CD8-positive, alpha-beta memory T cell (primary cell): ENCODE measurements at regions of chr12 and their contacts with region 1.

Region 1: GRCh38 chr12:3964439-3964838 is 91.2 kb upstream of the PARP11 start:
- DNase-seq: no peak
- H3K4me3 ChIP-seq: no peak overlapping the region
- H3K4me3 Mint-ChIP-seq: no peak overlapping the region
- H3K27ac ChIP-seq: no peak overlapping the region
- H3K27ac Mint-ChIP-seq: peak overlapping the region in 2 of 8 donors; percentile 19 to 69
- H3K4me1 ChIP-seq: peaks cover 20% of the 10 kb centered on the region
- H3K4me1 Mint-ChIP-seq: peaks cover 15 to 24% (median 19%) of the 10 kb centered on the region in 3 donors
- H3K27me3 ChIP-seq: no peaks in the 10 kb centered on the region
- H3K27me3 Mint-ChIP-seq: peaks cover 9 to 11% of the 10 kb centered on the region in 2 donors

Region 2: GRCh38 chr12:3538466-3539030 is 425.9 kb before region 1 on chr12:
- CTCF ChIA-PET with region 1: no interaction called
- POLR2A ChIA-PET with region 1: no interaction called
- DNase-seq: no peak
- H3K4me3 ChIP-seq: no peak overlapping the region
- H3K4me3 Mint-ChIP-seq: no peak overlapping the region
- H3K27ac ChIP-seq: no peak overlapping the region
- H3K27ac Mint-ChIP-seq: no peak overlapping the region
- H3K4me1 ChIP-seq: no peaks in the 10 kb centered on the region
- H3K4me1 Mint-ChIP-seq: no peaks in the 10 kb centered on the region
- H3K27me3 ChIP-seq: no peaks in the 10 kb centered on the region
- H3K27me3 Mint-ChIP-seq: peaks cover 12 to 36% of the 10 kb centered on the region in 2 donors

Region 3: DNA sequence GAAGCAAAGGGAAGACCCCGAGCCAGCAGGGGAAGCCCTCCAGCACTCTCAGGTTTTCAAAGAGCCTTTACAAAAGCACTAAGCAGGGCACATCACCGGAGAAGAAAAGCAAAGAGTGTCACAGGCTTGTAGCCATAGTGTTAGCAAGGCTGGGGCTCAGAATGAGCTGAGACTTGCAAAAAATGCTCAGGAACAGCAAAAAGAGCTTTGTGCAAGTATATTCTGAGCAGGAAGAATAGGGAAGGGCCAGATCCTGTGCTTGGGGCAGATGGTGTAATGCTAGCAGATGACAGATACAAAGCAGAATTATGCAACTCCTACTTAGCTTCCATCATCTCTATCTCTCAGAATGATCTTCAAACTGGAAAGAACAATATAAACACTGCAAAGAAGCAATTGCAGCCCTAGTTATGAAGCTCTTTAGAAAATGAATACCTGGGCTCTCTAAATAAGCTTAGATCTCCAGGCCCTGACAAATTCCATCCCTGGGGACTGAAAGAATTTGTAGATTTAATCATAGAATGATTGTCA is 67.6 kb before region 1 on chr12:
- CTCF ChIA-PET with region 1: interaction called, 11 read pairs
- POLR2A ChIA-PET with region 1: interaction called, 4 read pairs
- DNase-seq: no peak
- H3K4me3 ChIP-seq: peak overlapping the region; percentile 0
- H3K4me3 Mint-ChIP-seq: peak overlapping the region; percentile 24 to 77 (median 75)
- H3K27ac ChIP-seq: no peak overlapping the region
- H3K27ac Mint-ChIP-seq: peak overlapping the region; percentile 31 to 96 (median 94)
- H3K4me1 ChIP-seq: peaks cover 79% of the 10 kb centered on the region
- H3K4me1 Mint-ChIP-seq: peaks cover 27 to 41% (median 28%) of the 10 kb centered on the region in 3 donors
- H3K27me3 ChIP-seq: no peaks in the 10 kb centered on the region
- H3K27me3 Mint-ChIP-seq: no peaks in the 10 kb centered on the region

Region 4: DNA sequence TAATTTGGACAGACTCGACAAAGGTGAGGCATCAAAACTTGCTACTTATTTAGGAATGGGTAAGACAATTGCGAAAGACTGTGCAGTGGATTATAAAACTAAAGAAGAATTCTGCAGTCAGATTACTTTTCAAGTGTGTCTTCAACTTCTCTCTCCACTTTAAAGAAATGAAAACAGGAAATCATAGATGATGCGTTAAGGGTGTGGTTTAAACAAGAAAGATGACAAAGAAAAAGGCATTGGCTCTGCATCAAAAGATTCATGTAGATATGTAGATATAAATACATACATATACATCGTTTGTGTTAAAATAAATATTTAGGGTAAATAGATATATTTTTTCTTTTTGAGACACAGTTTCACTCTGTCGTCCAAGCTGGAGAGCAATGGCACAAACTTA is 16.7 kb before region 1 on chr12:
- CTCF ChIA-PET with region 1: interaction called, 26 read pairs
- POLR2A ChIA-PET with region 1: interaction called, 4 read pairs
- DNase-seq: peak in 2 of 5 donors; percentile 54 to 81
- H3K4me3 ChIP-seq: no peak overlapping the region
- H3K4me3 Mint-ChIP-seq: peak overlapping the region in 6 of 7 donors; percentile 2 to 47 (median 34)
- H3K27ac ChIP-seq: peak overlapping the region; percentile 38
- H3K27ac Mint-ChIP-seq: peak overlapping the region; percentile 64 to 96 (median 90)
- H3K4me1 ChIP-seq: peaks cover 54% of the 10 kb centered on the region
- H3K4me1 Mint-ChIP-seq: peaks cover 59 to 66% (median 60%) of the 10 kb centered on the region in 3 donors
- H3K27me3 ChIP-seq: no peaks in the 10 kb centered on the region
- H3K27me3 Mint-ChIP-seq: no peaks in the 10 kb centered on the region

Region 5: DNA sequence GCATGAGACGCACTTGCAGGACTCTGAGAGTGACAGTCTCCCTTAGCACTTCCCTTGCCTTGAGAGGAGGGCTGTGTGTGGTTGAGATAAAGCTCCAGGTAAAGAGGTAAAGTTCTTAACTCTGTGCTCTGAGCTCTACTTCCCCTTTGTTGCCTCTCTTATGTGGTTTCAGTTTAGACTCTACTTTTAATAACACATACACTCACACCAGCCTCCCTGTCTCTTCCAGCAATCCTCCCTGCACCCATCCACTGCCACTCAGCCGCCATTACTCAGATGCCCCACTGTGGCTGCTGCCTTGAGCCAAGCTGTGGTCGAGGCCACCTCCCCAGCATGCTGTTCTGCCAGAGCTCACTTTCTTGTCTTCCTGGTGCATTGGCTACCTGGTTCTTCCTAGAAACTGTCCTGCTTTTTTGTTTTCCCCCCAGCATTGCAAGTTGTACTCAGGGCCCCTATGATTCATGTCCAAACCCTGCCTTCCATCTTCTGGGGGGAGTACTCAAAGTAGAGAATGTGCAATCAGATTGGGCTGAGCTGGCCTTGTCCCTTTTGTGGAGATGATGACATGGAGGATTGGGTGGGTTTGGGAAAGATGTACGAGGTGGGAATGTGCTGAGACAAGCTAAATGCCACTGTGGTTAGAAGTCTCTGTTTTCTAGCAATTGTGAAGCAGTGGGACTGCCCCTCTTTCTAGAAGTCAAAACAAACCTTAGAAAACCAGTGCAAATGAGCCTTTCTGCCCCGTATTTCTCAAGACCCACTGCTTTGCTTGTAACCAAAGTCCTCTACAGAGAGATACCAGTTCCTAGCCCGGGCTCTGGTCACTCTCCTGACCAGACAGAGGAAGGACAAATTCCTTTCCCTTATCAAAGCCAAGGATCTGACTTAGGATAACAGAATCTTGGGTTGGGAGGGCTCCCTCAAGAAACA is 24.3 kb after region 1 on chr12:
- CTCF ChIA-PET with region 1: interaction called, 12 read pairs
- POLR2A ChIA-PET with region 1: interaction called, 3 read pairs
- DNase-seq: peak in 1 of 5 donors; percentile 57
- H3K4me3 ChIP-seq: peak overlapping the region; percentile 10
- H3K4me3 Mint-ChIP-seq: peak overlapping the region in 6 of 7 donors; percentile 21 to 72 (median 32)
- H3K27ac ChIP-seq: no peak overlapping the region
- H3K27ac Mint-ChIP-seq: peak overlapping the region; percentile 53 to 90 (median 72)
- H3K4me1 ChIP-seq: peaks cover 20% of the 10 kb centered on the region
- H3K4me1 Mint-ChIP-seq: peaks cover 16 to 26% (median 18%) of the 10 kb centered on the region in 3 donors
- H3K27me3 ChIP-seq: no peaks in the 10 kb centered on the region
- H3K27me3 Mint-ChIP-seq: peaks cover 0 to 3% of the 10 kb centered on the region in 2 donors